Activated naive CD4-positive, alpha-beta T cell treated with anti-CD3 and anti-CD28 coated beads for 36 hours (primary cell): ENCODE measurements at regions of chr3 and their contacts with region 1.

Region 1: GRCh38 chr3:46895204-46895660 is 17.7 kb downstream of the PTH1R start:
- DNase-seq: peak; percentile 81
- H3K4me3 Mint-ChIP-seq: no peak overlapping the region
- H3K27ac Mint-ChIP-seq: no peak overlapping the region
- H3K4me1 Mint-ChIP-seq: peaks cover 6% of the 10 kb centered on the region
- H3K27me3 Mint-ChIP-seq: peaks cover 43% of the 10 kb centered on the region

Region 2: DNA sequence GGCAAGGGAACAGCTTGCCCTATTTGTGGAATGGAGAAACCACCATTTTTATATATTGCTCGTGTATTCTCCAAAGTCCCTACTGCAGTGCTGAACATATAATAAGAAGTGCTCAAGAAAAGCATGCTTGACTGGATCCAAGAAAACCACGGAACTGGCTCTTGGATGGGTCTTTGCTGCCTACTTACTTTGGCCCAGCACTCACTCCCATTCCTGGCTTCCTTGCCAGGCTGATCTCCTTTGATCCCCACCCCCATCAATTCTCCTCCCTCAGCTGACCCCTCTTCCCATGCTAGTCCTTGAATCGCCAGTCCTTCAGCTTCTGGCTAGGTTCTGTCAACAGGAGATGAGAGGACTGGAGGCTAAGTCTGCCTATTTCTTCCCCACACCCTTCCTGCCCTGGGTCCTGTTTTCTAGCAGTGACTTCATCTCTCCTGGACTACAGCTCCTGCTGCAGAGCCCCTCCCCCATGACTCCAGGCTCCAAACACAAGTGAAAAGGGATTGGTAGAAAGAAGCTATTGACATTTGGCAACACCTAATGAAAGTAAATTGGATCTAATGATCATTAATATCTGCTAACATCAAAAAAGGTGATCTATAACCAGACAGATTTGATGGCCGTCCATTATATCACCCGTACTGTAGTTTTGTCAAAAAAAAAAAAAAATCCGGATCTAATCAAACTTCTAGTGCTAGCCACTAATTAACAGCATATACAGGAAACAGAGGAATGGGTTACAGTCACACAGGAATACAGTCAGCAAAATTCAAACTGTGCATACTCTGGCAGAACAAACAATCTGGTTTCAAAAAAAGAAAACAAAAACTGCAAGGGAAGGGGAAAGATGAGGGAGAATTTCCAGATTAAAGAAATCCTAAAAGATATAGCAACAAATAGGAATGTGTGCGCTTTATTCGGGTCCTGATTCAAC is 275.1 kb before region 1 on chr3:
- CTCF ChIA-PET with region 1: no interaction called
- intact Hi-C with region 1: no loop called
- DNase-seq: no peak
- H3K4me3 Mint-ChIP-seq: no peak overlapping the region
- H3K27ac Mint-ChIP-seq: no peak overlapping the region
- H3K4me1 Mint-ChIP-seq: no peaks in the 10 kb centered on the region
- H3K27me3 Mint-ChIP-seq: peaks cover 5% of the 10 kb centered on the region

Region 3: GRCh38 chr3:46663591-46664135 is 231.6 kb before region 1 on chr3:
- CTCF ChIA-PET with region 1: no interaction called
- intact Hi-C with region 1: loop called (anchors 1 kb)
- DNase-seq: no peak
- H3K4me3 Mint-ChIP-seq: no peak overlapping the region
- H3K27ac Mint-ChIP-seq: no peak overlapping the region
- H3K4me1 Mint-ChIP-seq: no peaks in the 10 kb centered on the region
- H3K27me3 Mint-ChIP-seq: no peaks in the 10 kb centered on the region

Region 4: GRCh38 chr3:46705022-46705530 is 190.2 kb before region 1 on chr3:
- CTCF ChIA-PET with region 1: interaction called, 7 read pairs
- intact Hi-C with region 1: loop called (anchors 1 kb)
- DNase-seq: peak; percentile 81
- H3K4me3 Mint-ChIP-seq: no peak overlapping the region
- H3K27ac Mint-ChIP-seq: no peak overlapping the region
- H3K4me1 Mint-ChIP-seq: peaks cover 10% of the 10 kb centered on the region
- H3K27me3 Mint-ChIP-seq: no peaks in the 10 kb centered on the region

Region 5: GRCh38 chr3:46866720-46867549 is 28.3 kb before region 1 on chr3:
- CTCF ChIA-PET with region 1: interaction called, 22 read pairs
- intact Hi-C with region 1: loop called (anchors 2 kb)
- DNase-seq: peak; percentile 84
- H3K4me3 Mint-ChIP-seq: no peak overlapping the region
- H3K27ac Mint-ChIP-seq: no peak overlapping the region
- H3K4me1 Mint-ChIP-seq: no peaks in the 10 kb centered on the region
- H3K27me3 Mint-ChIP-seq: no peaks in the 10 kb centered on the region

Region 6: GRCh38 chr3:46909535-46910442 is 14.6 kb after region 1 on chr3:
- CTCF ChIA-PET with region 1: interaction called, 12 read pairs
- intact Hi-C with region 1: no loop called
- DNase-seq: peak; percentile 91
- H3K4me3 Mint-ChIP-seq: no peak overlapping the region
- H3K27ac Mint-ChIP-seq: no peak overlapping the region
- H3K4me1 Mint-ChIP-seq: peaks cover 10% of the 10 kb centered on the region
- H3K27me3 Mint-ChIP-seq: no peaks in the 10 kb centered on the region